ENCODE measurements at regions of chr6 and their contacts with region 1.

Region 1: GRCh38 chr6:104639668-104640067 is 220.1 kb downstream of the HACE1 start:
- DNase-seq: no peak

Region 2: GRCh38 chr6:104705095-104705707 is 65.5 kb after region 1 on chr6:
- intact Hi-C with region 1: loop called (anchors 5 kb)
- DNase-seq: peak; percentile 78

Region 3: GRCh38 chr6:104828478-104828877 is 188.8 kb after region 1 on chr6:
- intact Hi-C with region 1: no loop called
- DNase-seq: no peak